Activated CD4-positive, alpha-beta T cell treated with anti-CD3 and anti-CD28 coated beads, Interleukin-2, amount 10 ng/mL, durations not matched to agents 24 days and 14 days (primary cell): ENCODE measurements at regions of chr1 and their contacts with region 1.

Region 1: GRCh38 chr1:91997607-91998195 is 32.1 kb upstream of the EPHX4 start:
- DNase-seq: peak; percentile 83
- H3K4me3 Mint-ChIP-seq: no peak overlapping the region
- H3K27ac Mint-ChIP-seq: no peak overlapping the region
- H3K4me1 Mint-ChIP-seq: no peaks in the 10 kb centered on the region
- H3K27me3 Mint-ChIP-seq: peaks cover 16% of the 10 kb centered on the region

Region 2: DNA sequence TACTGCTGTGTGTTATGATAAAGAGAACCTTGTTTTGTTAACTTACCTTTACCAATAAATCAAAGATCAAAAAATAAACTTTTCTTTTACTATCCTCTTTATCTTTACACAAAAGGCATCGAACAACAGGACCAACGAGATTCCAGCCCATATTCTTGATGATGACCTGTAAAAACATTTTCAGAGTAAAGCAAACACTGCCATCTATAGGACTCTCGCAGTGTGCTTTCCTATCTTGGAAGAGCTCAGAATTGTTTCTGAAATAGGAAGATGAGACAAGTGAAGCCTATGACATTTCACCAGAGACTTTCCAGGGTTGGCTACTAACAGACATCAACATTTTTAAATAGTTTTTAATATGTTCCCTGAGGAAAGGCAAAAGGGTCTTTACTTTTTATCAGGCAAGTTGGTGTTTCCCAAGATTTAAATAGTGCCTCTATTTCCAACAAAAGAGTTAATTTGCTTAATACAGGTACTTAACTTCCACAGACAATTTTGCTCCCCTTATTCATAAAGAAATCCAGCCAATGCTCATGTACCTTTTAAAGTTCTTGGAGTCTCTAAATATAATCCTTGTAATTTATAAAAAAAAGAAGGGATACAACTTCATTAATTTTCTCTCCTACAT is 293.8 kb after region 1 on chr1:
- intact Hi-C with region 1: loop called (anchors 1 kb)
- DNase-seq: peak; percentile 73
- H3K4me3 Mint-ChIP-seq: no peak overlapping the region
- H3K27ac Mint-ChIP-seq: no peak overlapping the region
- H3K4me1 Mint-ChIP-seq: peaks cover 21% of the 10 kb centered on the region
- H3K27me3 Mint-ChIP-seq: no peaks in the 10 kb centered on the region

Region 3: DNA sequence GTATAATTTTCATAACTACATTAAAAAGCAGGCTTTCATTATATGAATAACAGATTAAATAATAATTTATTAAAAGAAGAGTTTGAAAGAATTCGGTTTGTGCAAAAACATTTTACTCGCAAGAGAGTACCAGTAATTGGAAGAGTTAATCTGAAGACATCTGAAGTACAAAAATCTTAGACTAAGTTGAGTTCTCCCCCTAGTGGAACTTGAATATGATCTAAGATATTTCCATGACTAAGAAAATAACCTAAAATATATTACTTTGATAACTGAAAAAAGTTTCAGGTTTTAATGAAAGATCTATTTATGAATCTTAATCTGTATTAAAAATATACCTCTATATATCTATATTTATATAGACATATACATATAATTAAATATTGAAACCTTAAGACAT is 601.5 kb after region 1 on chr1:
- intact Hi-C with region 1: no loop called
- DNase-seq: no peak
- H3K4me3 Mint-ChIP-seq: no peak overlapping the region
- H3K27ac Mint-ChIP-seq: no peak overlapping the region
- H3K4me1 Mint-ChIP-seq: peaks cover 28% of the 10 kb centered on the region
- H3K27me3 Mint-ChIP-seq: no peaks in the 10 kb centered on the region

Region 4: DNA sequence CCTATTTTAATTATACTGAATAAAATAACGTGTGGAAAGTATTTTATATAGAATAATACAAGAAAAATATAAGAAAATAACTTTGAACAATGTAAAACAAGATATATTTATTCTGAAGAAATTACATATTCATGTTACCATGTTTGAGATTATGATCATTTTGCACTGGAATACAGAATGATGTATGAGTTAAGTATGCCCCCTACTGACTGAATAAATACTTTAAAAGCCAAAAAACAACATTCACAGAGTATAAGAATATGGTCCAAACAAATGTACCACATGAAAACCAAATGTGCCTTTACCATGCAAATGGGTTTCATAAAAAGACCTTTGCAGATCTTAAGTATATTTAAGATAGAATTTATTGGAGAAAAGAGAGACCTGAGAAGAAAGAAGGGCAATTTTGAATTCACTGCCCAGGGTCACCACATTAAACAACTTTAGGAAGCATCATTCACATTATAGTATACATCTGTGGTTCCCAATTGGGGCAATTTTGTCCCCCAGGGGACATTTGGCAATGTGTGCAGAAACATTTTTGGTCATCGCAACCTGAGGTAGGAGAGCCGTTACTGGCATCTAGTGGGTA is 625.6 kb after region 1 on chr1:
- intact Hi-C with region 1: loop called (anchors 1 kb)
- DNase-seq: peak; percentile 49
- H3K4me3 Mint-ChIP-seq: no peak overlapping the region
- H3K27ac Mint-ChIP-seq: no peak overlapping the region
- H3K4me1 Mint-ChIP-seq: no peaks in the 10 kb centered on the region
- H3K27me3 Mint-ChIP-seq: peaks cover 13% of the 10 kb centered on the region

Region 5: DNA sequence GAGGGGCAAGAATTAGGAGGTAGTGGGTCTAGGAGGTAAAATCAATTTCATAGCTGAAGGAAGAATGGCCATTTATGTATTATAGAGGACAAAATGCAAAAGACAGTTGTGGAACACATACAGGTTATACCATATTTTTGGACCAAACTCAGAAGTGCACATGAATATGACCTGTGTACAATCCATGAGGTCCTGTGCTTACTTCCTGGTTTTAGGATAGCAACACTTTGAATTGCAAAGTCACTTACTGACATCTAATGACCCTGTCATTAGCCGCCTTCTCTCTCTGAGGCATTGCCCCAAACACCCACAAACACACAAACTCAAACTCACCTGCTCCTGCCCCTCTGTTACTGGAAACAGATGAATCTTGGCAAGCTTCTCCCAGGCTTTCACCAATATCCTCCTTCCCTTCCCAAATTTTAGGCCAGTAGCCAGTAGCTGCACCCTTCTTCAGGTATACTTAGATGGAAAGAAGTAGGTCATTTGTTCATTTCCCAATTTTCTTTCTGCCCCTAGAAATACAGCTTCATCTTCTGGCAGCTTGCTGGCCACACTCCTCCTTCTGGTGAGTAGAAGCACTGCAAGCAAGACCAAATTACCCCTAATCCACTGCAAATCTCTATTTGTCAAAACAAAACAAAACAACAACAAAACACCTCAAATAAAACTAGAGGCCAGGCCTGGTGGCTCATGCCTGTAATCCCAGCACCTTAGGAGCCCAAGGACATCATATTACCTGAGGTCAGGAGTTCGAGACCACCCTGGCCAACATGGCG is 820.5 kb after region 1 on chr1:
- intact Hi-C with region 1: loop called (anchors 5 kb)
- DNase-seq: peak; percentile 72
- H3K4me3 Mint-ChIP-seq: no peak overlapping the region
- H3K27ac Mint-ChIP-seq: no peak overlapping the region
- H3K4me1 Mint-ChIP-seq: no peaks in the 10 kb centered on the region
- H3K27me3 Mint-ChIP-seq: peaks cover 32% of the 10 kb centered on the region